ENCODE measurements at regions of chr6 and their contacts with region 1.

Region 1: GRCh38 chr6:74749211-74750142 is 456.4 kb downstream of the COL12A1 start:
- DNase-seq: peak; percentile 39
- H3K4me3 Mint-ChIP-seq: peak overlapping the region; percentile 46
- H3K27ac Mint-ChIP-seq: peak overlapping the region; percentile 36
- H3K4me1 Mint-ChIP-seq: peaks cover 21% of the 10 kb centered on the region
- H3K27me3 Mint-ChIP-seq: no peaks in the 10 kb centered on the region
- CTCF ChIP-seq: no peak

Region 2: GRCh38 chr6:74991573-74992332 is 242.3 kb after region 1 on chr6:
- CTCF ChIA-PET with region 1: no interaction called
- intact Hi-C with region 1: loop called (anchors 5 kb)
- DNase-seq: no peak
- H3K4me3 Mint-ChIP-seq: no peak overlapping the region
- H3K27ac Mint-ChIP-seq: no peak overlapping the region
- H3K4me1 Mint-ChIP-seq: peaks cover 7% of the 10 kb centered on the region
- H3K27me3 Mint-ChIP-seq: no peaks in the 10 kb centered on the region
- CTCF ChIP-seq: peak; percentile 20

Region 3: GRCh38 chr6:75084872-75085381 is 335.4 kb after region 1 on chr6:
- CTCF ChIA-PET with region 1: no interaction called
- intact Hi-C with region 1: no loop called
- DNase-seq: peak; percentile 53
- H3K4me3 Mint-ChIP-seq: peak overlapping the region; percentile 86
- H3K27ac Mint-ChIP-seq: peak overlapping the region; percentile 19
- H3K4me1 Mint-ChIP-seq: peaks cover 21% of the 10 kb centered on the region
- H3K27me3 Mint-ChIP-seq: peaks cover 8% of the 10 kb centered on the region
- CTCF ChIP-seq: no peak